GM10248 (cell line): ENCODE measurements at regions of chr11 and their contacts with region 1.

Region 1: GRCh38 chr11:34585735-34586487 is 35.0 kb upstream of the EHF start:
- DNase-seq: peak; percentile 50
- CTCF ChIP-seq: peak; percentile 48

Region 2: GRCh38 chr11:34565417-34566207 is 20.3 kb before region 1 on chr11:
- CTCF ChIA-PET with region 1: interaction called, 16 read pairs
- POLR2A ChIA-PET with region 1: no interaction called
- DNase-seq: peak; percentile 35
- CTCF ChIP-seq: peak; percentile 46

Region 3: DNA sequence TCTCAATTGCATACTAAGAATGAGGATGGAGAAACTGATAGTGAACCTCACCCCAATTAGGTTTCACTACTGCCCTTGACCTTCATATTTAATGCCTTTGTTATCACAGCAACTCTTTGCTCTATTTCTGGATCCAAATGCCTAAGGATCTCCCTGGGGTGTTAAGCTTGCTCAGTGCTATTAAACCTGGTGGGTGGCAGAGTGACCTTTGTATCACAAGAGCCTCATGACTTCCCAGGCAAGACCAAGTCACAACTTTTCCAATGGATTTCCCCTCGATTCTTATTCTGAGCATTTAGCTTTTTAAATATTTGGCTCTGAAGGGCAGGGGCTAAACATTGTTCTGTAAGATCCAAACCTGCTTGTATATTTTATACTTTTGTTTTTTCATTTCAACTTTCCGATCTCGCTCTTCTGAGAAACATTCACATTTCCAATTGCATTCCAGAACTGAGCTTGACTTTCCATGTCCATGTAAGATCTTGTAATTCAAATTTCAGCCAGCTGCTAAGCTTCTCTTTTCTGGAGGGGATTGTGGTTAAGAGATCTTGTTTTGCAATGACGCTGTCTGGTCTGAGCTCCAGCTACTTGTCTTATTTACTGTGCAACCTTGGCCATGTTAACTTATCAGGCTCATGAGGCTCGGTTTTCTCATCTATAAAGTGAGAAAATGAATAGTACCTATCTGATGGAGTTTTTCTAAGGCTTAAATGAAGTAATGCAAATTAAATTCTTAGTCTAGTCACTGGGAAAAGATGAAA is 28.6 kb after region 1 on chr11:
- CTCF ChIA-PET with region 1: interaction called, 12 read pairs
- POLR2A ChIA-PET with region 1: no interaction called
- DNase-seq: peak; percentile 31
- CTCF ChIP-seq: no peak

Region 4: DNA sequence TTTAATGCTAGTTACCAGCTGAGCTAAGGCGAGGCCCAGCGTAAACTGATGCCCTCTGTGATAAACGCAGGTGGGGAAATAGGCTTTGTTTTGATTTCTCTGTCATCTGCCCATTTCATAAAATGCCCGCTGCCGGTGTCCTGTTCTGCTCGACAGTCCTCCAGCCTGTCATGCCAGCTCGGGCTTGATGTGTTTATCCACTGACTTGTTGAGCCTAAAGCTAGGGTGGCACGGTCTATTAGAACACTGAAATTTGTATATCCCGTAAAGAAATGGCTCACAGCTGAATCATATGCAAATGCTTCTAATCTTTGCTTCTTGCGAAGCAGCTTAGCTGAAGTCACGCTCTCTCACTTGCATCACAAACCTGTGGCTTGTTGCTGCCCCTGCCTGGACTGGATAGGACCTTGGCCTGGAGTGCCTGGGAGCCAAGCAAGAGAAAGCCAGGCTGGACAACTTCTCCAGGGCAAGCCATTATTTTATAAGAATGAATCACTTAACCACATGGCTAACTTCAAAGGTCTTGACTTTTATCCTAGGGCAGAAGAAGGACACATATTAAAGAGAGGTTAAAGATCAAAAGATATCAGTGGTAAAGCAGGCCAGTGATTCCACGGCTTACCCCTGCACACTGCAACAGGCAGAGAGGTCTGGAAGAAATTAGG is 68.0 kb after region 1 on chr11:
- CTCF ChIA-PET with region 1: interaction called, 23 read pairs
- POLR2A ChIA-PET with region 1: no interaction called
- DNase-seq: no peak
- CTCF ChIP-seq: no peak

Region 5: DNA sequence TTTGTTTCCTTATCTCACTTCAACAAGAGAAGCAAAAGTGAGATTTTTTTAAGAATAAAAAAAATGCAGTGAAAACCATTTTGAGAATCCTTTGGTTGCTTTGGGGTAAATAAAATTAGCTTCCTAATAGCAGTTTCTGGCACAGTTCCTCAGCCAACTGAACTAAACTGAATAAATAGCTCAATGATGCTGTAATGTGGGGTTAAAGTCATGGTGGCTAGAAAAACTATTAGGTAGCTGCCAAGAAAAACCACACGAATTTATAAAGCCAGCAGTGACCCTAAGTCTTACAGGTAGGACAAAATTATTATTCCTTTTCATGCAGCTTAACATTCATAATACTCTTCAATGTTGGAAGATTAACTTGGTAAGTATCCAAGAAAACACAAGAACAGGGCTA is 187.9 kb after region 1 on chr11:
- CTCF ChIA-PET with region 1: no interaction called
- POLR2A ChIA-PET with region 1: no interaction called
- DNase-seq: no peak
- CTCF ChIP-seq: no peak

Region 6: GRCh38 chr11:34890812-34891211 is 304.9 kb after region 1 on chr11:
- CTCF ChIA-PET with region 1: interaction called, 42 read pairs
- POLR2A ChIA-PET with region 1: no interaction called
- DNase-seq: peak; percentile 21
- CTCF ChIP-seq: peak; percentile 39